Activated CD4-positive, alpha-beta T cell treated with anti-CD3 and anti-CD28 coated beads, Interleukin-2, amount 10 ng/mL, durations not matched to agents 24 days and 14 days (primary cell): ENCODE measurements at regions of chr17 and their contacts with region 1.

Region 1: DNA sequence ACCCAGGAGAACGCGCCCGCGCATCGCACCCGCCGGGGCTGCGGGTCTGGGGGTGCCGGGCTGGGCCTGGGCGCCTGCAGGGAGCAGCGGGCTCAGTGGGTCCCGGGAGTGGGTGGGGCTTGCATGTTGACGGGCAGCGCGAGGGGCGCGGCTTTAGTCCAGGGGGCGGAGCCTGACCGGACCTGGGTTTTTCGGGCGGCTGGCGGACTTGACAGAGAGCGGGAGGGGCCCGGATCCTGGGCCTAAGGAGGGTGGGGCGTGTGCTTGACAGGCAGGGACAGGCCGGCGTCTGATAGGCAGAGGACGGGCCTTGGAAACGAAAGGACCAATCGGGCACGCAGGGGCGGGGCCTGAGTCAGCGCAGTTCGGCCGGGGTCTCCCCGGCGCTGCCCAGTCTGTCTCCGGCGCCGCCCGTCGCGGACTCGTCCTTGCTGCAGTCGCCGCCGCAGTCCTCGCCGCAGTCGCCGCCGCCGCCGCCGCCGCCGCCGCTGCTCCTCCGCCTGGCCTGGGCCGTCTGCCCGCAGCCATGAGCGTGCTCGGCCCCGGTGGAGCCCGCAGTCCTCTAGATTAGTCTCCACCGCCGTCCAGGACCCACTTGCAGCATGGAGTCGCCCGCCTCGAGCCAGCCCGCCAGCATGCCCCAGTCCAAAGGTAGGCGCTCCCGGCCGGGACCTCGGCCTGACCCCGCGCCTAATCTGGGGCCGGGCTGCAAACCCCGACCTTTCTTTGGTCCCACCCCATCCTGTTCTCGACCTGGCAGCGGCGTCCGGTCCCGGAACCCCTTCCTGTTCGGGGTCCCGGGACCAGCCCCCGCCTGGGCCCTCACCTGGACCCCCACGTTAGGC is at the start of gene MAP2K3:
- DNase-seq: peak; percentile 99
- H3K4me3 Mint-ChIP-seq: peak within 1 kb of the TSS; percentile 100
- H3K27ac Mint-ChIP-seq: peak within 1 kb of the TSS; percentile 94
- H3K4me1 Mint-ChIP-seq: peaks cover 43% of the 10 kb centered on the region
- H3K27me3 Mint-ChIP-seq: peaks cover 2% of the 10 kb centered on the region
- total RNA-seq, gene MAP2K3: 159 and 166 TPM in 2 replicates

Region 2: GRCh38 chr17:21043286-21044232 is 241.0 kb before region 1 on chr17:
- intact Hi-C with region 1: loop called (anchors 1 kb)
- DNase-seq: peak; percentile 99
- H3K4me3 Mint-ChIP-seq: peak overlapping the region; percentile 82
- H3K27ac Mint-ChIP-seq: peak overlapping the region; percentile 91
- H3K4me1 Mint-ChIP-seq: peaks cover 25% of the 10 kb centered on the region
- H3K27me3 Mint-ChIP-seq: peaks cover 4% of the 10 kb centered on the region

Region 3: DNA sequence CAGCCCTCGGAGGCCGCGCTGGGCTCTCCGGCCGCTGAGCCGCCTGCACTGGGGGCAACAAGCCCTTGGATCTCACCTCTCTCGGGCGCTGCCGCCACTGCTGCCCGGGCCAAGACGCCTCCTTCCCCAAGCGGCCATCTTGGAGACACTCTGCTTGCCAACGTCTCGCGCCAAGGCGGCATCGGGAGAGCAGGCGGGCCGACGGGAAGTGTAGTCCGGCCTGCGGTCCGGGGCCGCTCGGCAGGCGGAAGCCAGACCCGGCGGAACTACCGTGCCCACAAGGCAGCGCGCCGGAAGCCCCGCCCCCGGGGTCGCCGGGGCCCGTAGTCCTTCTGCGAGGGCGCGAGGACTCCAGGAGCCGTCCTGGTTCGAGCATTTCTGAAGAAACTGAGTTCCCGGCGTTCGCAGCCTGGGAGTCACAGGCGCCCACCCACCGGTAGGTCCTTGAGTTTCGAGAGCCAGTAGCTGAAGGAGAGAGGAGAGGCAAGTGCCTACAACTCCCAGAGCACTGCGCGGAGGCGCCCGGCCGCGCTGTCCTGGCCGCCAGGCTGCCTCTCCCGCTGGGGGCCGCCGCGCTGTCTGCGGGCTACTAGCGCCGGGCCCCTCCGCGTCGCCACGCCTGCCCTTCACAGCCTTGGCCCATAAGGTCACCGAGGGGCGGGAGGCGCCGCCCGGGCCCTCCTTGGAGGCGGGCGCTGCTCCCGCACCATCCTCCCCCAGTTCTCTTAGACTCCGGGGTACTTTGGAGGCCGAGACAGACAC is 70.3 kb before region 1 on chr17 and contains the start of gene TMEM11:
- intact Hi-C with region 1: loop called (anchors 1 kb)
- DNase-seq: peak; percentile 99
- H3K4me3 Mint-ChIP-seq: peak within 1 kb of the TSS; percentile 90
- H3K27ac Mint-ChIP-seq: peak within 1 kb of the TSS; percentile 95
- H3K4me1 Mint-ChIP-seq: peaks cover 48% of the 10 kb centered on the region
- H3K27me3 Mint-ChIP-seq: no peaks in the 10 kb centered on the region
- total RNA-seq, gene TMEM11: 33.5 and 34.7 TPM in 2 replicates

Region 4: GRCh38 chr17:21318439-21318838 is 33.9 kb after region 1 on chr17:
- intact Hi-C with region 1: loop called (anchors 2 kb)
- DNase-seq: no peak
- H3K4me3 Mint-ChIP-seq: no peak overlapping the region
- H3K27ac Mint-ChIP-seq: no peak overlapping the region
- H3K4me1 Mint-ChIP-seq: peaks cover 7% of the 10 kb centered on the region
- H3K27me3 Mint-ChIP-seq: peaks cover 2% of the 10 kb centered on the region

Region 5: DNA sequence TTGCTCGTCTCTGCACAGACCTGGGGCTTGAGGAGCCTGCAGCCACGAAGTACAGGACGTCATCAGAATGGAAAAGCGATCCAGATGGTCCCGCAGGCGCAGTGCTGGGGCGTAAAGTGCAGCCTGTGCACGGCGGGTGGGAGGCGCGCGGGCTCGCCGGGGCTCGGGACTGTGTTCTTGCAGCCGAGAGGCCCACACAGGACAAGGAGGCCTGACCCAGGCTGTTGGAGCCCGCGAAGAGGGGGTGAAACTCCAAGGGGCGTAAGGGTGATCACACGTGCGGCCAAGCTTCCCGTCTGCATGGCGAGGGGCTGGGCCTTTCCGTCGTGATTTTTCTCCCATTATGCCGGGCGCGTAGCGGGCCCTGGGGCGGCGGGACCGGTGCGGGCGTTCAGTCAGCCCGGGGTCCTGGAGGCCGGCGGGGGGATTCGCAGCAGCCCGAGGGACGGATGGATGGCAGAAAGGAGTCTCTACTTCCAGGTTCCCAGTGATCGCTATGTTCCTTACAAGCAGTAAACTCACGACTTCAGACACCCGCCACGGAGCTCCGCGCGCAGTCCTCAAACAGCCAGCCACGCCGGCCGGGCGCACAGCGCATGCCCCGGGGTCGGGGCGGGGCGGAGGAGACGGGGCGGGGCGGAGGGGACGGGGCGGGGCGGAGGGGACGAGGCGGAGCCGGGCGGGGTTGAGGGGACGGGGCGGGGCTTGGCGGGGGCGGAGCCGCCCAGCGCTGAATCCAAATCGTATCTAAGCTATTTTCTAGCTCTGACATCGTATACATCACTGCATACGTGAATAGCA is 266.7 kb after region 1 on chr17:
- intact Hi-C with region 1: loop called (anchors 5 kb)
- DNase-seq: peak; percentile 92
- H3K4me3 Mint-ChIP-seq: peak overlapping the region; percentile 92
- H3K27ac Mint-ChIP-seq: peak overlapping the region; percentile 65
- H3K4me1 Mint-ChIP-seq: peaks cover 24% of the 10 kb centered on the region
- H3K27me3 Mint-ChIP-seq: peaks cover 22% of the 10 kb centered on the region